H1 (cell line): ENCODE measurements at regions of chr17 and their contacts with region 1.

Region 1: GRCh38 chr17:10646392-10646990 is 10.6 kb downstream of the MYH3 start:
- DNase-seq: peak in 1 of 2 experiments; percentile 87
- H3K4me3 ChIP-seq: no peak overlapping the region
- H3K27ac ChIP-seq: no peak overlapping the region
- H3K4me1 ChIP-seq: no peaks in the 10 kb centered on the region
- H3K27me3 ChIP-seq: no peaks in the 10 kb centered on the region
- CTCF ChIP-seq: peak; percentile 72 to 86 (median 81)
- EP300 ChIP-seq: no peak
- POLR2A ChIP-seq: no peak
- RAD21 ChIP-seq: peak; percentile 76 to 83

Region 2: GRCh38 chr17:10589553-10590125 is 56.9 kb before region 1 on chr17:
- CTCF ChIA-PET with region 1: no interaction called
- POLR2A ChIA-PET with region 1: no interaction called
- DNase-seq: no peak
- H3K4me3 ChIP-seq: no peak overlapping the region
- H3K27ac ChIP-seq: no peak overlapping the region
- H3K4me1 ChIP-seq: no peaks in the 10 kb centered on the region
- H3K27me3 ChIP-seq: no peaks in the 10 kb centered on the region
- CTCF ChIP-seq: no peak
- EP300 ChIP-seq: no peak
- POLR2A ChIP-seq: no peak
- RAD21 ChIP-seq: no peak

Region 3: GRCh38 chr17:10631048-10631700 is 15.3 kb before region 1 on chr17:
- CTCF ChIA-PET with region 1: interaction called, 223 read pairs
- POLR2A ChIA-PET with region 1: interaction called, 3 read pairs
- DNase-seq: peak in 1 of 2 experiments; percentile 85
- H3K4me3 ChIP-seq: no peak overlapping the region
- H3K27ac ChIP-seq: no peak overlapping the region
- H3K4me1 ChIP-seq: no peaks in the 10 kb centered on the region
- H3K27me3 ChIP-seq: no peaks in the 10 kb centered on the region
- CTCF ChIP-seq: peak; percentile 75 to 79 (median 78)
- EP300 ChIP-seq: no peak
- POLR2A ChIP-seq: no peak
- RAD21 ChIP-seq: peak; percentile 65 to 70

Region 4: GRCh38 chr17:10661437-10661836 is 14.9 kb after region 1 on chr17:
- CTCF ChIA-PET with region 1: interaction called, 39 read pairs
- POLR2A ChIA-PET with region 1: no interaction called
- DNase-seq: no peak
- H3K4me3 ChIP-seq: no peak overlapping the region
- H3K27ac ChIP-seq: no peak overlapping the region
- H3K4me1 ChIP-seq: no peaks in the 10 kb centered on the region
- H3K27me3 ChIP-seq: no peaks in the 10 kb centered on the region
- CTCF ChIP-seq: no peak
- EP300 ChIP-seq: no peak
- POLR2A ChIP-seq: no peak
- RAD21 ChIP-seq: no peak

Region 5: GRCh38 chr17:10668771-10669170 is 22.3 kb after region 1 on chr17:
- CTCF ChIA-PET with region 1: interaction called, 26 read pairs
- POLR2A ChIA-PET with region 1: interaction called, 3 read pairs
- DNase-seq: no peak
- H3K4me3 ChIP-seq: no peak overlapping the region
- H3K27ac ChIP-seq: no peak overlapping the region
- H3K4me1 ChIP-seq: no peaks in the 10 kb centered on the region
- H3K27me3 ChIP-seq: no peaks in the 10 kb centered on the region
- CTCF ChIP-seq: no peak
- EP300 ChIP-seq: no peak
- POLR2A ChIP-seq: no peak
- RAD21 ChIP-seq: no peak

Region 6: DNA sequence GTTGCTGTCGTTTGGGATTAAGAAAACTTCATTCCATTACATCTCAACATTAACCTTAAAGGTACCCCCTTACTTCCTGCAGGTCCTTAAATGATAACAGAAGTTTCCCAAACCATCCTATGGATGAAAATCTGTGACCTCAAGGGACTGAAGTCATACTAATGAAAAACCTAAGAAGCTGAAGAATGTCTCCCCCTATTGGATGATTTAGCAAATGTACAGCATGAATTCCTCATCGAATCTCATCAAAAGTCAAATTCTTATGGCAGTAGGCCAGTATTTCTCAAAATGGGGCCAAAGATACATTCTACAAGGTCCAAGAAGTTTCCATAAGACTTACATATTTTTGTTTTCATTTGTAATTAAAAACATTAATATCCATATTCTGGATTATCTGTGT is 37.4 kb after region 1 on chr17:
- CTCF ChIA-PET with region 1: interaction called, 21 read pairs
- POLR2A ChIA-PET with region 1: interaction called, 3 read pairs
- DNase-seq: no peak
- H3K4me3 ChIP-seq: no peak overlapping the region
- H3K27ac ChIP-seq: no peak overlapping the region
- H3K4me1 ChIP-seq: no peaks in the 10 kb centered on the region
- H3K27me3 ChIP-seq: no peaks in the 10 kb centered on the region
- CTCF ChIP-seq: peak in 1 of 3 experiments; percentile 56; a peak in 2 of 4 replicates
- EP300 ChIP-seq: no peak
- POLR2A ChIP-seq: no peak
- RAD21 ChIP-seq: peak in 1 of 2 experiments; percentile 36; a peak in 2 of 4 replicates

Region 7: DNA sequence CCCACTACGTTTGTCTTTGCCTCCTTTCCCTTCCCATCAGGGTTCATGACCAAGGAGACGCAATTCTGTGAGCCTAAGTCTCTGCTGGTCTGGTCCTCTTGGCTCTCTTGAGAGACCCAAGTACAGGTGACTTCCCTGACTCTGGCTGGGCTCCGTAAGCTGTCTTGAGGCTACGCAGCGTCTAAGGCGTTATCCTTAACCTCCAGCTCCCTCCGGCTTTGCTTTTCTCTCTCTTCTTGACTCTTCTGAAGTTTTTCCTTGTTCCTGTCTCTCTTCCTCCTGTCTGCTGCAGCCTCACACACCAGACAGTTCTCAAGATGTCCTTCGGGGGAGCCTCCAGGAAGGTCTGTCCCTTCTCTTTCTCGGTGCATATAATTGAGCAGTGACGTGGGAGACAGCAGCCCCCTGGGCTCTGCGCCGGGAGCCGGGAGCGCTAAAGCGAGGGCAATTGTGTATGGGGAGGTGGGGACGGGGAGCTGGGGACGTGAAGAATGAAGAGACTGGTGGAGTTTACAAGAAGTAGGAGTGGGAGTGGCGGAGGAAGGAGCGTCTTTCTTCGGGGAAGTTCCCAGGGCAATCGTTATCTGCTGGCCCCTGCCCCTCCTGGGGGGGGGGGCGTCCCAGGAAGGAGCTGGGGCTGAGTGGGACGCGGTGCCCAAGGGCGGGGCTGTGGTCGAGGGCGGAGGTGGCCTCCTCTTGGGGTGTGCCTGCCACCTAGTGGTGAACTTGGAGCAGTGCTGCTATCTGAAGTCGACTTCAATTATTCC is 198.3 kb after region 1 on chr17:
- CTCF ChIA-PET with region 1: interaction called, 10 read pairs
- POLR2A ChIA-PET with region 1: no interaction called
- DNase-seq: peak; percentile 46 to 81
- H3K4me3 ChIP-seq: peak overlapping the region; percentile 32 to 69 (median 57)
- H3K27ac ChIP-seq: no peak overlapping the region
- H3K4me1 ChIP-seq: peaks cover 7 to 10% (median 7%) of the 10 kb centered on the region in 4 experiments; a peak in 6 of 7 replicates
- H3K27me3 ChIP-seq: peaks cover 0 to 2% (median 0%) of the 10 kb centered on the region in 4 experiments; a peak in 1 of 7 replicates
- CTCF ChIP-seq: peak; percentile 89 to 95 (median 91)
- EP300 ChIP-seq: no peak
- POLR2A ChIP-seq: no peak
- RAD21 ChIP-seq: peak; percentile 91 to 92

Region 8: DNA sequence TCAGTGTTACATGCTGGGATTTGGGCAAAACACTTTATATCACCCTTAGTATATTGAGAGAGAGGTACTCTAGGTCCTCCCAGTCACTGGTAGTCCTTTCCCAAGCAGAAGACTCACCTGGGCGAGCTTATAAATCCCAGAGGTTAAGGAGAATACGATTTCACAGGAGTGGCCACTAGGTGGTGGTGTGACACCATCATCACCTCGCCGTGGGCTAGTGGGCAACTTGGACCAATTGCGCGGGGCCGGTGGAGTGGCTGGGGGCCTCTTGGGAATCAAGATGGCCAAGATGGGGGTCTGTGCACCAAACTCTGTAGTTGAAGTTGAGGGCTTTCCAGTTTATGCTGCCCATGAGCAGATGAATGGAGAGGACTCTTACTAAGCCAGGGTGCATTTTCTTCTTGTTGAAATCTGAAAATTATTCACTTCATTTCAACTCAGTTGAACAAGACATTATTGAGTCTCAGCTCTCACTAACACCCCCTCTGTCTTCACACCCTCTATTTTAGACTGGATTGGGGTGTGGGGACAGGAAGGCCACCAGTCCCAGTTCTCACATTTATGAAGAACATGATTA is 229.6 kb after region 1 on chr17:
- CTCF ChIA-PET with region 1: interaction called, 12 read pairs
- POLR2A ChIA-PET with region 1: no interaction called
- DNase-seq: peak in 1 of 2 experiments; percentile 88
- H3K4me3 ChIP-seq: no peak overlapping the region
- H3K27ac ChIP-seq: no peak overlapping the region
- H3K4me1 ChIP-seq: no peaks in the 10 kb centered on the region
- H3K27me3 ChIP-seq: no peaks in the 10 kb centered on the region
- CTCF ChIP-seq: peak; percentile 74 to 83 (median 75)
- EP300 ChIP-seq: no peak
- POLR2A ChIP-seq: no peak
- RAD21 ChIP-seq: peak; percentile 91 to 96